Gastrocnemius medialis (tissue), 4 donors: ENCODE measurements at regions of chr20 and their contacts with region 1.

Region 1: DNA sequence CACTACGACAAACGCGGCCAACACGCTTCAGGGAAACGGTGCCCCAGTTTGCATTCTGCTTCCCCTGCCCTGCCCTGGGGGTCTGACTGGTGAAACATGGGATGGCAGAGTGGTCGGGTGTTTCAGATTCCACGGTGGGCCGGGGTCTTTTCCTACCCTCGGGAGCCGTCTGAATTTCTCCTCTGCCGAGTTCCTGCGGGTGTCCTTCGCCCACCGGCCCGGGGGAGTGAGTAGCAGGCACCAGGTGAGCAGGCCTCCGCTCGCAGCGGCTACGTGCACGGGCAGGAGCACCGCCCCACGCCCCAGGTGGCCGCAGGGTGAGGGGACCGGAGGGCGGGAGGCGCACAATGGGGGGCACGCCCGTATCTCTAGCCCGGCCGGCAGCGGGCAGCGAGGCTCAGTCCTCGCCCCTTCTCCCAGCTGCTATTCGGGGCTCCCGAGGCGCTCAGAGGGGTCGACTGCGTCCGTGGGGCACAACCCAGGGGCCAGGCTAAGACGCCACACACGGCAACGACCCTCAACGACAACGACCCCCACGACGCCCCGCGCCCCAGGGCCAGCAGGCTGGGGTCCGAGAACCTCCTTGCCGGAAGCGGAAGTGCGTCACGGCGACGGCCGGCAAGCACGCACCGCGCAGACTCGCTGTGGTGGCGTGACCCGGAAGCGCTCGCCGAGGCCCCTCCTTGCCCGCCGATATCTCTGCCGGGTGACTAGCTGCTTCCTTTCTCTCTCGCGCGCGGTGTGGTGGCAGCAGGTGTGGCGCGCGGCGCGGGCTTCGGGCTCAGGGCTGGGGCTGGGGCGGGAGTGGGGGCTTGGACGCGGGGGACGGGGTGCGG is at the start of gene RPS21:
- DNase-seq: peak; percentile 91
- ATAC-seq: peak; percentile 90 to 91
- H3K4me3 ChIP-seq: peak within 1 kb of the TSS; percentile 80 to 100 (median 95)
- H3K27ac ChIP-seq: peak within 1 kb of the TSS; percentile 87 to 99 (median 96)
- H3K4me1 ChIP-seq: peaks cover 24 to 33% of the 10 kb centered on the region in 2 donors
- H3K27me3 ChIP-seq: no peaks in the 10 kb centered on the region
- CTCF ChIP-seq: peak in 1 of 5 experiments; percentile 16
- POLR2A ChIP-seq: peak; percentile 91 to 97
- total RNA-seq, gene RPS21: 1,167 to 4,037 (median 2,295) TPM

Region 2: GRCh38 chr20:62182613-62183425 is 203.8 kb before region 1 on chr20 and contains the start of gene MTG2:
- in situ Hi-C with region 1: loop called in 1 of 4 experiments (anchors 25 kb)
- intact Hi-C with region 1: loop called (anchors 10 kb)
- DNase-seq: peak; percentile 92 to 94
- ATAC-seq: peak; percentile 98
- H3K4me3 ChIP-seq: peak within 1 kb of the TSS; percentile 77 to 99 (median 84)
- H3K27ac ChIP-seq: peak within 1 kb of the TSS; percentile 87 to 97 (median 90)
- H3K4me1 ChIP-seq: peaks cover 16 to 20% of the 10 kb centered on the region in 2 donors
- H3K27me3 ChIP-seq: no peaks in the 10 kb centered on the region
- CTCF ChIP-seq: peak in 3 of 5 experiments; percentile 14 to 25 (median 15)
- POLR2A ChIP-seq: peak; percentile 89 to 93
- total RNA-seq, gene MTG2: 21.0 to 50.8 (median 29.3) TPM

Region 3: GRCh38 chr20:62292108-62292507 is 94.5 kb before region 1 on chr20:
- in situ Hi-C with region 1: loop called in 3 of 4 experiments (anchors 5 to 25 kb)
- intact Hi-C with region 1: no loop called
- DNase-seq: no peak
- ATAC-seq: no peak
- H3K4me3 ChIP-seq: no peak overlapping the region
- H3K27ac ChIP-seq: no peak overlapping the region
- H3K4me1 ChIP-seq: no peaks in the 10 kb centered on the region
- H3K27me3 ChIP-seq: no peaks in the 10 kb centered on the region
- CTCF ChIP-seq: no peak
- POLR2A ChIP-seq: no peak

Region 4: DNA sequence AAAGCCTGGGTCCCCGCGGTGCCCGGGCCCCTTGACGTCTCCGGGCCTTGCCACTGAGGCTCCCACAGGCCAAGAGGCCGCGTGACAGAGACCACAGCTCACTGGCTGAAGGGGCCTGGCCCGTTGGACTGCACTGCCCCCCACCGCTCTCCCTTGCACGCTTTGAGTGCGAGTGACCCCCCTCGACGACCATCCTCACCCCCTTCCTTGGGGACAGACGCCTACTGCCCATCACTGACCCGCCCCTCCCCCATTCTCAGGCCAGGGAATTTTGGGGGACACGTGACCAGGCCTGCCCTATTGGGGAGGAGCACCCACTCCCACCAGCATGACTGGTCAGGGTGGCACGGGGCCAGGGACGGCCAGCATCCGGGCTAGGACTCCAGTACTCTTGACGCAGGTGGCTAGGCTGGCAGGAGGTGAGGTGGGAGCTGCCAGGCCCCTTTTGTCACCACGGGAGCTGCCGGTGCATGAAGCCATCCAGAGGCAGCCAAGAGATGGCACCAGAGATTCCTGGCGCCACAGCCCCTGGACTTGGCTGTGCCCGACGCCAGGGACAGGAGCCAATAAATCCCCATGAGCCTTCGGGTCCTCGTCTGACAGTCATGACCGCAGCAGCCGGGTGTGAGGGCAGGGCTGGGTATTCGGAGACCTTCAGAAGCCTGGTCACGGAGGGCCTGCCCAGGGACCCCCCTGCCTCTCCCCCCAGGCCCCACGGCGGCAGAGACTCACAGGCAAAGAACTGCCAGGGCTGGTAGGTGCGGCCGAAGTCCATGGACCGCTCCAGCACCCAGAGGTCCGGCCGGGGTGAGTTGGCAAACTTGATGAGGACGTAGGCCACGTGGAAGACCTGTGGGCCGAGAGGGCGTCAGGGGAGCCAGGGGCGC is 34.0 kb before region 1 on chr20:
- in situ Hi-C with region 1: no loop called
- intact Hi-C with region 1: loop called (anchors 1 kb)
- DNase-seq: peak; percentile 80 to 98
- ATAC-seq: peak; percentile 83 to 85
- H3K4me3 ChIP-seq: peak overlapping the region in 3 of 4 donors; percentile 22 to 34 (median 31)
- H3K27ac ChIP-seq: peak overlapping the region; percentile 66 to 80 (median 76)
- H3K4me1 ChIP-seq: peaks cover 48 to 52% of the 10 kb centered on the region in 2 donors
- H3K27me3 ChIP-seq: no peaks in the 10 kb centered on the region
- CTCF ChIP-seq: peak in 4 of 5 experiments; percentile 18 to 46 (median 31)
- POLR2A ChIP-seq: no peak